ENCODE measurements at regions of chr4 and their contacts with region 1.

Region 1: GRCh38 chr4:80072744-80073472 is at the start of gene ANTXR2:
- DNase-seq: peak; percentile 70
- ATAC-seq: peak; percentile 97
- H3K4me3 ChIP-seq: peak within 1 kb of the TSS; percentile 85 to 90 (median 90)
- H3K27ac ChIP-seq: peak within 1 kb of the TSS; percentile 70
- H3K4me1 ChIP-seq: peaks cover 33% of the 10 kb centered on the region
- H3K27me3 ChIP-seq: no peaks in the 10 kb centered on the region
- CTCF ChIP-seq: no peak
- EP300 ChIP-seq: no peak
- POLR2A ChIP-seq: peak; percentile 50 to 91
- RAD21 ChIP-seq: peak; percentile 24; the same call in 1 of the 2 replicates
- total RNA-seq, gene ANTXR2: 8.4 and 14.5 TPM in 2 replicates

Region 2: DNA sequence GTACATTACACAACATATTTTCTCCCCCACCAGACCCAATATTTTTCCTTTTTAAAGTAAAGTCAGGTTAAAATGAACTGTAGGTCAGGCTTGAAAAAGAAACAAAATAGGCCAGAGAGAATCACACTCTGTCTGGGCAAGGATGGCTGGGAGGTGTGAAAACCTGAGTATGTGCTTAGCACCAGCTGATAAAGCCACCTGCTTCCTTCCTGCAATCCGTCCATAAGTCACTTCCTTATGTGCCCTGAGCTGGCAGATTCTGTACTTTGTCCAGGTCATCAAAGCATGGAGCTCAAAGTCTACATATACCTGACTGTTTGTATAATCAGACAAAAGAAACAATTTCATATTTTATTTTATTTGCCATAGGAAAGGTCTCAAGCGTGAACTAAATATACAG is 37.6 kb before region 1 on chr4:
- CTCF ChIA-PET with region 1: no interaction called
- POLR2A ChIA-PET with region 1: interaction called, 6 read pairs
- in situ Hi-C with region 1: no loop called
- intact Hi-C with region 1: loop called (anchors 2 kb)
- DNase-seq: peak; percentile 7
- ATAC-seq: peak; percentile 68; the same call in 2 of the 3 replicates
- H3K4me3 ChIP-seq: no peak overlapping the region
- H3K27ac ChIP-seq: no peak overlapping the region
- H3K4me1 ChIP-seq: peaks cover 10% of the 10 kb centered on the region
- H3K27me3 ChIP-seq: no peaks in the 10 kb centered on the region
- CTCF ChIP-seq: no peak
- EP300 ChIP-seq: no peak
- POLR2A ChIP-seq: no peak
- RAD21 ChIP-seq: no peak

Region 3: GRCh38 chr4:80062527-80062926 is 10.4 kb before region 1 on chr4:
- CTCF ChIA-PET with region 1: no interaction called
- POLR2A ChIA-PET with region 1: interaction called, 7 read pairs
- in situ Hi-C with region 1: no loop called
- intact Hi-C with region 1: loop called (anchors 1 kb)
- DNase-seq: no peak
- ATAC-seq: no peak
- H3K4me3 ChIP-seq: no peak overlapping the region
- H3K27ac ChIP-seq: no peak overlapping the region
- H3K4me1 ChIP-seq: peaks cover 10% of the 10 kb centered on the region
- H3K27me3 ChIP-seq: no peaks in the 10 kb centered on the region
- CTCF ChIP-seq: no peak
- EP300 ChIP-seq: no peak
- POLR2A ChIP-seq: no peak
- RAD21 ChIP-seq: no peak

Region 4: GRCh38 chr4:80184053-80184790 is 111.3 kb after region 1 on chr4:
- CTCF ChIA-PET with region 1: no interaction called
- POLR2A ChIA-PET with region 1: no interaction called
- in situ Hi-C with region 1: no loop called
- intact Hi-C with region 1: loop called (anchors 2 kb)
- DNase-seq: peak; percentile 32
- ATAC-seq: peak; percentile 99
- H3K4me3 ChIP-seq: peak overlapping the region; percentile 45 to 75 (median 53)
- H3K27ac ChIP-seq: no peak overlapping the region
- H3K4me1 ChIP-seq: peaks cover 7% of the 10 kb centered on the region; the same call in 1 of the 2 replicates
- H3K27me3 ChIP-seq: peaks cover 4 to 59% of the 10 kb centered on the region in 2 experiments
- CTCF ChIP-seq: peak; percentile 85
- EP300 ChIP-seq: no peak
- POLR2A ChIP-seq: no peak
- RAD21 ChIP-seq: peak; percentile 75

Measured in HepG2 (cell line).